Right cardiac atrium (tissue), 5 donors: ENCODE measurements at regions of chr6 and their contacts with region 1.

Region 1: DNA sequence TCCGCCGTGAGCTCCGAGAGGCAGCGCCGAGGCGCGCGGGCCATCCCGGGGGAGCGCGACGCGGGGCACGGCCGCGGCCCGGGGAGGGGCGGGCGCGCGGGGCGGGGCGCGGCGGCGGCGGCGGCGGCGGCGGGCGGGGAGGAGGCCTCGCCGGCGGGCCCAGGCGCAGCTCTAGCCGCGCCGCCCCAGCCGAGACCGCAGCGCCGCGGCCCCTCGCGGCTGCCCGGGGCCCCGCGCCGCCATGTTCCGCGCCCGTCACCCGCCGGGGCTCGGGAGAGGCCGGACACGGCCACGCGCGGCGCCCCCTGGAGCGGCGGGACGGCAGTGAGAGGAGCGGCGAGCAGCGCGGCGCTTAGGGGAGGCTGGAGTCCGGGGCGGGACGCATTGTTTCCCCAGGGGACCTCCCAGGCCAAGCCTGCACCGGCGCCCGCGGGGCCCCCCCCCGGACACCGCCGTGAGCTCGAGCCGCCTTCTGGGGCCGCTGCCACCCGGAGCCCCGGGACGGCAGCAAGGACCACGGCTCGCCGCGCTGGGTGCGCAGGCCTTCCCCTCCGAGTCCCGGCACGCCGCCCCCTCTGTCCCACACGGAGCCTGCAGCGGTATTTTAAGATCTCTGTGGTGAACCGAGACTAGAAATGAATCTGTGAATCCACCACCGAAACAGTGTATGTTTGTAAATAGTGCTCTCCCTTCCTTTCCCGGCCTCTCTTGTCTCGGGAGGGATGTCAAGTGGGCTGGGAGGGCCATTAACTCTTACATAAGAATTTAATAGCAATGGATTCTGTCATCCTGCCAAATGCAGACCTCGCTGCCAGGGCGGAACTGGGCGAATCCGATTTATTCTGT is at the start of gene KIF13A:
- DNase-seq: peak; percentile 79 to 91 (median 90)
- ATAC-seq: peak; percentile 87 to 89
- H3K4me3 ChIP-seq: peak within 1 kb of the TSS; percentile 93
- H3K27ac ChIP-seq: peak within 1 kb of the TSS; percentile 96
- H3K4me1 ChIP-seq: peaks cover 6% of the 10 kb centered on the region
- H3K27me3 ChIP-seq: no peaks in the 10 kb centered on the region
- total RNA-seq, gene KIF13A: 59.8 to 79.6 (median 73.3) TPM

Region 2: GRCh38 chr6:17831135-17831534 is 156.7 kb before region 1 on chr6:
- intact Hi-C with region 1: loop called in 1 of 4 experiments (anchors 10 kb)
- DNase-seq: no peak
- ATAC-seq: peak; percentile 71 to 92
- H3K4me3 ChIP-seq: no peak overlapping the region
- H3K27ac ChIP-seq: no peak overlapping the region
- H3K4me1 ChIP-seq: peaks cover 2% of the 10 kb centered on the region
- H3K27me3 ChIP-seq: no peaks in the 10 kb centered on the region

Region 3: DNA sequence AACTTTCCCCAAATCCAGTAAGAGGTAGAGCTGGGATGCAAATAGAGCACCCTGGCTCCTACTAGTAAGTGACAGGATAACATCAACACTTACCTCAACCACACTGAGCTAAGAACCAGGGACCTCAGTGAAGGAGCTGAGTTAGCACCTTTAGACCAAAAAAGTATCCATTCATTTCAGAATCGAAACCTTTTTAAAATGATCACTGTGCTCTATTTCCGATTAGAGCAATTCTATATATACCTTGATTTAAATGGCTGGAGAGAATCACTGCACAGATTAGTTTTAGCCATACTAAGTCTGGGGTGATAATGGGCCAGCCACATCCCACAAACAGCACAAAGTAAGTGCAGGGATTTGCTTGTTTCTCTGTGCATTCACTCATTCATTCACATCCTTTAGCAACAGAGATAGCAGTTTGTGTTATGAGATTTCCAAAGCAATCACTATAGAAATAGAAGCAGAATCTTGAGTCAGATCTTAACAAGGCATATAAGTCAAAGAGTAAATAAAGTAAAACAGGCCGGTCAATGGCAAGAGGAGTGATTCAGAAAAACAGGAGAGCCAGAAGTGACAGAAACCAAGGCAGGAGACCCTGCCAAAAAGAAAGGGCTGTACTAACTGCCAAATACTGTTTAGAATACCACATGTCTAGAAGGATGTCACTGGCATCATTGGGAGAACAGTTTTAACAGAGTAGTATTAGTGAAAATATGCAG is 136.6 kb before region 1 on chr6:
- intact Hi-C with region 1: loop called in 1 of 4 experiments (anchors 10 kb)
- DNase-seq: no peak
- ATAC-seq: no peak
- H3K4me3 ChIP-seq: no peak overlapping the region
- H3K27ac ChIP-seq: no peak overlapping the region
- H3K4me1 ChIP-seq: peaks cover 2% of the 10 kb centered on the region
- H3K27me3 ChIP-seq: no peaks in the 10 kb centered on the region

Region 4: GRCh38 chr6:17865798-17866725 is 121.7 kb before region 1 on chr6:
- intact Hi-C with region 1: loop called in 1 of 4 experiments (anchors 10 kb)
- DNase-seq: peak; percentile 84 to 86 (median 86)
- ATAC-seq: peak; percentile 86 to 98
- H3K4me3 ChIP-seq: no peak overlapping the region
- H3K27ac ChIP-seq: peak overlapping the region; percentile 82
- H3K4me1 ChIP-seq: peaks cover 8% of the 10 kb centered on the region
- H3K27me3 ChIP-seq: no peaks in the 10 kb centered on the region

Region 5: DNA sequence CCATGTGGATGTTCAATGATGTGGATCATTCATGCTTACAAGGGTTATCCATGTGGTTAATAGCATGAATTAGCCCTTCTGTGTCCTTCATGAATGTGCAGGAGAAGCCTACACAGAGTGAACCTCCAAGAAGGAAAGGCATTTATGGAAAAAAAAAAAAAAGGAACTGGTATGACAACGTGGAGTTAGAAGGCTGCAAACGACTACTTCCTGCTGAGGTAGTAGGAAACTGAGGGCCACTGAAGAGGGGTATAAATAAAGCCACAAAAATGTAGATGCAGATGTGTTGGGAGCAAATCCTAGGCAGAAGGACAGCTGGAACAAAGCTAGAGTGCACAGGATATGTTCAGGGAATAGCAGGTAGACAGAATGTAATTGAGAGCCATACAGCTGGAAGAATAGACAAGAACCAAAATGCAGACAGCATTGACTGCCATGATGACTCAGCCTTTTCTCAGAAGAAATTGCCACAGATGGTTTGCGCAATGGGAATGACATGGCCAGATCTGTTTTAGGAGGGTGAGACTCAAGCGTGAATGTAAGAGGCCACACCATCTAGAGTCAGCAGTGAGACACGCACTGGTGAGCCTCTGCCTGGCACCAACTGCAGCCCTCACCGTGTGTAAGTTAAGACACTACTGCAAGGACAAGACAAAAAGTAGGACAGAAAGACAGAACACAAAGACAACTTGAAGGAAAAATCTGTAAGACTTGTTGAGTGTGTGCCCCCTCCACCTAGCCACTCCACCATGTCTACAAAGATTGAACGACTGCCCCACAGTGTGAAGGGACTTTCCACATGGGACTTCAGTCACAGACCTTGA is 80.2 kb before region 1 on chr6:
- intact Hi-C with region 1: loop called in 1 of 4 experiments (anchors 10 kb)
- DNase-seq: peak; percentile 70 to 79 (median 73)
- ATAC-seq: peak; percentile 90 to 94
- H3K4me3 ChIP-seq: no peak overlapping the region
- H3K27ac ChIP-seq: peak overlapping the region; percentile 84
- H3K4me1 ChIP-seq: peaks cover 8% of the 10 kb centered on the region
- H3K27me3 ChIP-seq: no peaks in the 10 kb centered on the region

Region 6: DNA sequence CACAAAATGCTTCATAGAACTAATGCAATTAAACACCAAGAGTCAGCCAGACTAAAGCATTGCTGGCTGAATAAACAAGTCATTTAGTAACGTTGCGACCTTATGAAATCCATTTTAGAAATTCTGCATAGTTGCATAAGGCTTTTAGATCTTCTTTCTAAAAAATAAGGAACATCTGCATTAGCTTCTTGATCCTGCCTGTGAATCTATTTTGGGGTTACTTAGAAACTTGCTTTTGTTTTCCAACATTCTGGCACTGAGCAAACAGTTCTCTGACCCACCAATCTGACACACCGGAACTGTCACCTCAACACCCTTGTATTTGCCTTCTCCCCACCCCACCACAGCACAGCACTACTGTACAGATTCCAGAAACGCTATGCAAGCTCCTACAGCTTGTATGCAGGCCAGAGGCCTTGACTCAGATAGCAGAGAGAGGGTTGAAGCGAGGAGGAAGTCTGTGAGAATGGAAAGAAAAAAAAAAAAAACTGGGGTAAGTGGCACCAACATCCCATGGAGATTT is 55.4 kb before region 1 on chr6:
- intact Hi-C with region 1: loop called in 1 of 4 experiments (anchors 10 kb)
- DNase-seq: peak; percentile 59 to 74 (median 69)
- ATAC-seq: peak; percentile 94
- H3K4me3 ChIP-seq: no peak overlapping the region
- H3K27ac ChIP-seq: peak overlapping the region; percentile 70
- H3K4me1 ChIP-seq: peaks cover 17% of the 10 kb centered on the region
- H3K27me3 ChIP-seq: no peaks in the 10 kb centered on the region

Region 7: GRCh38 chr6:18122124-18123093 is 134.6 kb after region 1 on chr6 and contains the start of gene NHLRC1:
- intact Hi-C with region 1: loop called in 3 of 4 experiments (anchors 5 to 10 kb)
- DNase-seq: peak; percentile 93 to 97 (median 96)
- ATAC-seq: peak; percentile 99
- H3K4me3 ChIP-seq: peak within 1 kb of the TSS; percentile 17
- H3K27ac ChIP-seq: no peak within 1 kb of the TSS
- H3K4me1 ChIP-seq: no peaks in the 10 kb centered on the region
- H3K27me3 ChIP-seq: no peaks in the 10 kb centered on the region
- total RNA-seq, gene NHLRC1: 1.3 to 3.7 (median 2.7) TPM

Region 8: DNA sequence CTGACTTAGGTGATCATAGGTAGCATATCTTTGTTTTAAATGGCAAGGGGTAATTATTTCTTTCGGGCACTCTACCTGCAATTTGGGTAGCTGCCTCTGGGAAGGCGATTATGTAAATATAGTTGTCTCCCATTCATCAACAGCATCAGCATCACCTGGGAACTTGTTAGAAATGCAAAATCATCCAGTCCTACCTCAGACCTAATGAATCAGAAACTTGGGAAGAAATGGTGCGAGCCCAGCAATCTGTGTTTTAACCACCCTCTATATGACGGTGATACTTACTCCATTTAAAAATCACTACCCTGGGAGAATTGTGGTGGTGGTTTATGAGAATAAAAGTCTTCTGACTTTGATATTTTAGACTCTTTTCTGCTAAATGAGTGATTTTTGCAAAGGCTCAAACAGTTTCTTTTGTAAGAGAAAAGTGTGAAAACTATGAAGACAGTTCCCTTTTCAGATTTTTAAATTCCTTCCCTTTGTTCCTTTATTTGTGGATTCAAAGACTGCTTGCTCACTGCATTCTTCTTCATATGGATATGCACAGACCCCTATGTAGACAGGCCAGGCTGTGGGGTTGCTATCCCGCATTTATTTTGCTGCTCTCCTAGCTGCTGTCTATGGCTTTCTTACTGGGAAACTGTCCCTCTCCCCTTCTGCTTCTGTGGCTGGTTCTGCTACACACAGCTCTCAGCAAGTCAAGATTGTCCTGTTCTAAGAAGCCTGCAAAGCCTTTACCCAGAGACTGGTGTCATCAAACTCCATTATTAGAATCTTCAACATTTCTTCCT is 764.7 kb after region 1 on chr6:
- intact Hi-C with region 1: no loop called
- DNase-seq: no peak
- ATAC-seq: no peak
- H3K4me3 ChIP-seq: no peak overlapping the region
- H3K27ac ChIP-seq: no peak overlapping the region
- H3K4me1 ChIP-seq: no peaks in the 10 kb centered on the region
- H3K27me3 ChIP-seq: no peaks in the 10 kb centered on the region